A549 (cell line): ENCODE measurements at regions of chr11 and their contacts with region 1.

Region 1: GRCh38 chr11:19071255-19071654 is 10.7 kb upstream of the MRGPRX2 start:
- DNase-seq: peak; percentile 77 to 90
- ATAC-seq: peak; percentile 94 to 98
- H3K4me3 ChIP-seq: 0 out of 3 replicates have a peak overlapping the region, but pooled peaks have one; percentile 18
- H3K27ac ChIP-seq: no peak overlapping the region
- H3K4me1 ChIP-seq: no peaks in the 10 kb centered on the region
- CTCF ChIP-seq: peak; percentile 99
- EP300 ChIP-seq: no peak
- POLR2A ChIP-seq: no peak
- RAD21 ChIP-seq: peak; percentile 93 to 95

Region 2: GRCh38 chr11:19018901-19019300 is 52.4 kb before region 1 on chr11:
- CTCF ChIA-PET with region 1: no interaction called
- POLR2A ChIA-PET with region 1: no interaction called
- DNase-seq: no peak
- ATAC-seq: no peak
- H3K4me3 ChIP-seq: no peak overlapping the region
- H3K27ac ChIP-seq: no peak overlapping the region
- H3K4me1 ChIP-seq: no peaks in the 10 kb centered on the region; the same call in 2 of the 3 replicates
- CTCF ChIP-seq: no peak
- EP300 ChIP-seq: no peak
- POLR2A ChIP-seq: no peak
- RAD21 ChIP-seq: no peak

Region 3: GRCh38 chr11:19055016-19055415 is 16.2 kb before region 1 on chr11:
- CTCF ChIA-PET with region 1: interaction called, 21 read pairs
- POLR2A ChIA-PET with region 1: no interaction called
- DNase-seq: no peak
- ATAC-seq: no peak
- H3K4me3 ChIP-seq: no peak overlapping the region
- H3K27ac ChIP-seq: no peak overlapping the region
- H3K4me1 ChIP-seq: no peaks in the 10 kb centered on the region
- CTCF ChIP-seq: no peak
- EP300 ChIP-seq: no peak
- POLR2A ChIP-seq: no peak
- RAD21 ChIP-seq: no peak

Region 4: DNA sequence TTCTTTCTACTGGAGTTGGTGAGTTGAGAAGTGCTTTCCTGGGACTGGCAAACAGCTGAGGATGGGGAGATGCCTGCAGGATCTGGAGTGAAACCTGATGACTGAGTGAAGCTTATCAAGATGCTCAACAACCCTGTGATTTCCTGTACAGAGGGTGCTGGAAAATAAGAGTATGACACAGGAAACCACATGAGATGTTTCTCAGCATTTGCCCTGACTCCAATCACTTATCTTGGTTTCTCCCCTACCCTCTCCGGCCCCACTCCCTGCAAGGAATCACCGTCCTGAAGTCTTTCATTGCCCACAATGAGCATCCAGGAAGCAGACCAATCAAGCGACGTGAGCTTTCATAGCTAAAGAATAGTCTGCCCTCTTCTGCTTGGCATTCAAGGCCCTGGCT is 10.6 kb before region 1 on chr11 and contains the start of gene MRGPRX2:
- CTCF ChIA-PET with region 1: interaction called, 21 read pairs
- POLR2A ChIA-PET with region 1: no interaction called
- DNase-seq: no peak
- ATAC-seq: no peak
- H3K4me3 ChIP-seq: no peak within 1 kb of the TSS
- H3K27ac ChIP-seq: no peak within 1 kb of the TSS
- H3K4me1 ChIP-seq: no peaks in the 10 kb centered on the region
- CTCF ChIP-seq: no peak
- EP300 ChIP-seq: no peak
- POLR2A ChIP-seq: no peak
- RAD21 ChIP-seq: no peak
- polyA plus RNA-seq, gene MRGPRX2: not detected in 2 replicates

Region 5: GRCh38 chr11:19087658-19088057 is 16.4 kb after region 1 on chr11:
- CTCF ChIA-PET with region 1: interaction called, 22 read pairs
- POLR2A ChIA-PET with region 1: no interaction called
- DNase-seq: no peak
- ATAC-seq: no peak
- H3K4me3 ChIP-seq: no peak overlapping the region
- H3K27ac ChIP-seq: no peak overlapping the region
- H3K4me1 ChIP-seq: no peaks in the 10 kb centered on the region
- CTCF ChIP-seq: no peak
- EP300 ChIP-seq: no peak
- POLR2A ChIP-seq: no peak
- RAD21 ChIP-seq: no peak

Region 6: GRCh38 chr11:19110280-19110679 is 39.0 kb after region 1 on chr11:
- CTCF ChIA-PET with region 1: interaction called, 17 read pairs
- POLR2A ChIA-PET with region 1: no interaction called
- DNase-seq: no peak
- ATAC-seq: no peak
- H3K4me3 ChIP-seq: no peak overlapping the region
- H3K27ac ChIP-seq: no peak overlapping the region
- H3K4me1 ChIP-seq: no peaks in the 10 kb centered on the region
- CTCF ChIP-seq: no peak
- EP300 ChIP-seq: no peak
- POLR2A ChIP-seq: no peak
- RAD21 ChIP-seq: no peak

Region 7: DNA sequence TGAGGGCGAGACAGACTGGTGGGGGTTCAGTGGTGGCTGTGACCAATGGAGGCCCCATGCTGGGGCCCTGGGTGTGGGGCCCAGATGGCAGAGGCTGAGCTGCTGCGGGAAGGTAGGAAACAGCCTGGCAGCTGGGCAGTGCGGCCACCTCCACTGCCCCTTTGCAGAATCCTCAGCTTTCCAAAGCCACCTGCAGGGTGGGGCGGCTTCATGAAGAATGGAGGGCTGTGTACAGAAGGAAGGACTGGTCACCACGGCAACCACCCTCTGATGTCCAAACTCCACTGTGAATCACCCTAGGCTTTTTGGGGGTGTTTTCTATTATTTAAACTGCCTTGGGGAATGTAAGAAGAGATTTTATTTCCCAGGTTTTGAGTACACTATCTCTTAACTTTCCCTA is 475.1 kb after region 1 on chr11:
- CTCF ChIA-PET with region 1: interaction called, 218 read pairs
- POLR2A ChIA-PET with region 1: no interaction called
- DNase-seq: peak in 1 of 2 experiments; percentile 9
- ATAC-seq: peak in 1 of 2 experiments; percentile 50; a peak in 2 of 6 replicates
- H3K4me3 ChIP-seq: no peak overlapping the region
- H3K27ac ChIP-seq: no peak overlapping the region
- H3K4me1 ChIP-seq: 0 out of 3 replicates have a peak, but pooled peaks cover 3% of the 10 kb centered on the region
- CTCF ChIP-seq: no peak
- EP300 ChIP-seq: no peak
- POLR2A ChIP-seq: no peak
- RAD21 ChIP-seq: no peak